ENCODE measurements at regions of chr21 and their contacts with region 1.

Region 1: DNA sequence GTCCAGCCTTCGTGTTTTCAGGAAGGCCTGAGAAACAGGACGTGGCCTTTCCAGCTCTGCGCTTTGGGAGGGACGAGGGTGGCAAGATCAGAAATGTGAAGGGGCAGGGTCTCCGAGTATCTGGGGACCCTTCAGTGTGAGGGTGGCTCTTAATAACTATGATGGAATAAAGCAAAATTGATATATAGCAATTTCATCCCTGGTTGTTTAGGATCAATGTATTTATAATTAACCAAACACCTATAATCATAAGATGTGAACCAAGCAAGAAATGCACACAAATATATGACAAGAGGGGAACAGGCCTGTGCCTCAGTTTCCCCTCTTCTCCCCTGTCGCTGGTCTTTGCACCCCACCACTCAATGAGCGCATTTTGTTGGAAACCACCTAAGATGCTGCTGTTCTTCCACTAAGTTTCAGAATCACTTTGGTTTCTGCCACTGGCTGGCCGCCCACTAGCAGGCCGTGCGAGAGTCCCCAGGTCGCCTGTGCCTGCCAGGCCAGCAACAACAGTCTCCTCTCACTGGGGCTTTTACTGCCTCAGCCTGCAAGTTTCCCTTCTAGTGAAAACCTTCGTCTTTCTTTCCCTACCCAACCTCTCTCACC is 36.6 kb downstream of the UBASH3A start:
- DNase-seq: no peak
- H3K4me3 ChIP-seq: no peak overlapping the region
- H3K27ac ChIP-seq: no peak overlapping the region
- H3K4me1 ChIP-seq: no peaks in the 10 kb centered on the region
- H3K27me3 ChIP-seq: peaks cover 0 to 34% (median 0%) of the 10 kb centered on the region in 3 donors
- CTCF ChIP-seq: no peak
- EP300 ChIP-seq: no peak
- POLR2A ChIP-seq: no peak

Region 2: DNA sequence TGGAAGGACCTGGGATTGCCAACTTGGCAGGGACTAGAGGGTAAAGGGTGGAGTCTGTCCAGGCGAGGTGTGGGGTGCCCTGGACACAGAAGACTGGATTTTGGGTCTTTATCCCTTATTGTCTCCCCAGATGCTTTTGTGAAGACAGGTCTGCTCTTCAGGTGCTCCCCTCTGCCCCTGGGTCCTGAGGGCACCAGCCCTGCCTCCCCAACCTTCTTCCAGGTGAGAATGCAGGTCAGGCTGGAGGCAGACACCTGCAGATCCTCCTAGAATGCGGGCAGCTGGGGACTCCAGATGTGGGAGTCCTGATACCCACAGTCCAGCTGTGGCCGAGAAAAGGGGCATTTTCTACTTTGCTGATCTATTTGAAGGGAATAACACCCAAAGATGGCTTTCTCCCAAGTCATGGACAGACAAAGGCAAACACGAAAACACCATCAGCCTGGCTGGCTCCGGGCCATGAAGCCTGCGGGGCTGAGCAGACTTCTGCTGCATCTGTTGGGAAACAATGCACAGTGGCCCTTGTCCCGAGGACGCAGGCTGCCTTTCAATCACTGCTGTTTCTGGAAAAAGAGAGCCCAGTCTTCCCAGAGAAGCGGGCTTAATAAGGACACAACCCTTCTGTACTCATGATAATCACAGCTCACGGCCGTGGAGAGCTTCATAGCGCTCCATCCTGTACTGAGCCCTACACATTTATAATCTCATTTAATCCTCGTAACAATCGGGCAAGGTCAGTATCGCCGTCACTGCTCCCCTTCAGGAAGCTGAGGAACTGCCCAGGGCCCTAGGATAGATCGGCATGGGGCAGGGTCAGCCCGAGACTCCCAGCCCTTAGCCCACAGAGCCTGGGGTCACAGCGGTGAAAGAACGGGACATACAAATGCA is 283.4 kb before region 1 on chr21:
- intact Hi-C with region 1: loop called (anchors 10 kb)
- DNase-seq: peak in 1 of 2 donors; percentile 77
- H3K4me3 ChIP-seq: no peak overlapping the region
- H3K27ac ChIP-seq: no peak overlapping the region
- H3K4me1 ChIP-seq: peaks cover 0 to 5% (median 2%) of the 10 kb centered on the region in 4 donors
- H3K27me3 ChIP-seq: peaks cover 0 to 21% (median 0%) of the 10 kb centered on the region in 3 donors
- CTCF ChIP-seq: no peak
- EP300 ChIP-seq: no peak
- POLR2A ChIP-seq: no peak

Region 3: GRCh38 chr21:42309753-42310221 is 130.5 kb before region 1 on chr21:
- intact Hi-C with region 1: loop called (anchors 10 kb)
- DNase-seq: peak; percentile 75 to 87
- H3K4me3 ChIP-seq: no peak overlapping the region
- H3K27ac ChIP-seq: no peak overlapping the region
- H3K4me1 ChIP-seq: peaks cover 8 to 37% (median 26%) of the 10 kb centered on the region in 4 donors
- H3K27me3 ChIP-seq: peaks cover 0 to 68% (median 10%) of the 10 kb centered on the region in 3 donors
- CTCF ChIP-seq: peak in 5 of 7 experiments; percentile 47 to 84 (median 74)
- EP300 ChIP-seq: no peak
- POLR2A ChIP-seq: no peak

Region 4: GRCh38 chr21:42340187-42341050 is 99.9 kb before region 1 on chr21:
- intact Hi-C with region 1: loop called (anchors 10 kb)
- DNase-seq: no peak
- H3K4me3 ChIP-seq: no peak overlapping the region
- H3K27ac ChIP-seq: no peak overlapping the region
- H3K4me1 ChIP-seq: peaks cover 4 to 18% (median 14%) of the 10 kb centered on the region in 4 donors
- H3K27me3 ChIP-seq: peaks cover 0 to 6% (median 0%) of the 10 kb centered on the region in 3 donors
- CTCF ChIP-seq: no peak
- EP300 ChIP-seq: no peak
- POLR2A ChIP-seq: no peak